ENCODE measurements at regions of chr2 and their contacts with region 1.

Region 1: DNA sequence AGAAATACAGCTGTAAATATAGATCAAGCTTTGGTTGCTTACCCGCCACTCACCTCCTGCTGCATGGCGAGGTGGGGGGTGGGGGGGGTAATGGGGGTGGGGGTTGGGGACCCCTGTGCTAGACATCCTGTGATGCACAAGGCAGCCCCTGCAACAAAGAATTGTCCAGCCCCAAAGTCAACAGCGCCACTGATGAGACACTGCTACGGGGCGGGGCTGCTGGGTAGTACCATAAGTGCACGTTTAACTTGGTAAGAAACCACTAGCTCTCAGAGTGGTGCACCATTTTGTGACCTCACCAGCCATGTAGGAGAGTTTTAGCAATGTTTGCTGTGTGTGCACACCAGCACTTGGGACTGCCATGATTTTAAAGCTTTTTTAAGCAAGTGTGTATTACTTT is 40.3 kb downstream of the SNORC start:
- DNase-seq: no peak
- H3K4me3 ChIP-seq: no peak overlapping the region
- H3K4me3 Mint-ChIP-seq: no peak overlapping the region
- H3K27ac ChIP-seq: no peak overlapping the region
- H3K27ac Mint-ChIP-seq: no peak overlapping the region
- H3K4me1 ChIP-seq: no peaks in the 10 kb centered on the region
- H3K4me1 Mint-ChIP-seq: no peaks in the 10 kb centered on the region
- H3K27me3 ChIP-seq: no peaks in the 10 kb centered on the region
- H3K27me3 Mint-ChIP-seq: peaks cover 6 to 51% of the 10 kb centered on the region in 2 donors

Region 2: DNA sequence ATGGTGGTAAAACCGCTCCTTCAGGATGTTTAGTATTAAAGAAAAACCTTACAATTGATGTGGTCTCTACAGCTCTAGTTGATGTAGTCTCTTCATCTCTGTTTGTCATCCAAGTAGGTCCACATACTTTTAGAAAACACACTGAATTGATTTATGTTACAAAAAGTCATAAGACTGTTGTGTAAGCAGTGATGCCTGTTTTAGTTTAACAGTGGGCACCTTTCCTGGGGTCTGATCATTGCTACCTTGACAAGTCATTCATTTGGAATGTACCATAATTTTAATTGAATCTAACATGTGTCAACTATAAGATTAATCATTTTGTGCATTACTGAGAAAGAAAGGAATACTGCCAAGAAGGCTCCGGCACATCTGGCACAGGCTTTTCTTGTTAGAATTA is 178.9 kb before region 1 on chr2:
- CTCF ChIA-PET with region 1: no interaction called
- POLR2A ChIA-PET with region 1: interaction called, 10 read pairs
- DNase-seq: no peak
- H3K4me3 ChIP-seq: no peak overlapping the region
- H3K4me3 Mint-ChIP-seq: no peak overlapping the region
- H3K27ac ChIP-seq: no peak overlapping the region
- H3K27ac Mint-ChIP-seq: peak overlapping the region in 3 of 8 donors; percentile 36 to 64 (median 37)
- H3K4me1 ChIP-seq: no peaks in the 10 kb centered on the region
- H3K4me1 Mint-ChIP-seq: peaks cover 19 to 38% (median 26%) of the 10 kb centered on the region in 3 donors
- H3K27me3 ChIP-seq: no peaks in the 10 kb centered on the region
- H3K27me3 Mint-ChIP-seq: no peaks in the 10 kb centered on the region

Region 3: DNA sequence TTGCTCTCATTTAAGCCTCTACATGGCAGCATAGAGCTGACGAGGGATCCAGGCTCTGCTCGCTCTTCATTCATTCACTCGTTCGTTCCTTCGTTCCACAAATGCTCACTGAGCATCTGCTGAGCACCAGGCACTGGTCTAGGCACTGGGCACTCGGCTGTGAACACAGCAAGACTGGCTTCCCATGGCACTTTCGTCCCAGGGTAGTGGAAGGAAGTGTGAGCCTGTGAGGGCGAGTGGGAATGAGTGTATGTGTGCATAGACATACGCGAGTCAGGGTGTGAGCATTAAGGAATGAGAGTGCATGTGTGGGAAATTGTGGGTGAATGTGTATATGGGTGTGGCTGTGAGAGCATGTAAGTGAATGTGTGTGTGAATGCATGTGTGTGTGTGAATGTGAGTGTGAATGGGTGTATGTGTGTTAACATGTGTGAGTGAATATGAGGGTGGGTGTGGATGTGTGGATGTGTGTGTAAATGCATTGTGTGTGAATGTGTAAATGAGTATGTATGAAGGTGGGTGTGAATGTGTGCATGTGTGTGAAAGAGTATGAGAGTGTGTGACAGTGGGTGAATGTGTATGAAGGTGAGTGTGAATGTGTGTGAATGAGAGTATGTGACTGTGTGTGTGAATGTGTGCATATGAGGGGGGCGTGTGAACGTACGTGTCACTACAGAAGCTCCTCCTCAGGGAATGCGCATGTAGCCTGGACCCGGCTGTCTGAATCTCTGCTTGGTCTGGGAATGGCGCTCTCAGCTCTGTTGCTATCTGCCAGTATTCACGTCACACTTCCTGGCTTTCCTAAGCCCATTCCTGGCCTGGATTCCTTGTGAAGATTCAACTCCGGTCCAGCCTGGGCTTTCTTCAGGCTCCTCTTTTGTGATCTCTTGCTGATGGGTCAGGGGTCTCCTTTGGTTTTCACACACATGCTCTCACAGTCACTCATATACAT is 11.5 kb before region 1 on chr2:
- CTCF ChIA-PET with region 1: no interaction called
- POLR2A ChIA-PET with region 1: no interaction called
- DNase-seq: no peak
- H3K4me3 ChIP-seq: no peak overlapping the region
- H3K4me3 Mint-ChIP-seq: no peak overlapping the region
- H3K27ac ChIP-seq: no peak overlapping the region
- H3K27ac Mint-ChIP-seq: no peak overlapping the region
- H3K4me1 ChIP-seq: no peaks in the 10 kb centered on the region
- H3K4me1 Mint-ChIP-seq: no peaks in the 10 kb centered on the region
- H3K27me3 ChIP-seq: no peaks in the 10 kb centered on the region
- H3K27me3 Mint-ChIP-seq: peaks cover 0 to 3% of the 10 kb centered on the region in 2 donors

Region 4: GRCh38 chr2:232937278-232937906 is 27.0 kb after region 1 on chr2:
- CTCF ChIA-PET with region 1: no interaction called
- POLR2A ChIA-PET with region 1: no interaction called
- DNase-seq: no peak
- H3K4me3 ChIP-seq: no peak overlapping the region
- H3K4me3 Mint-ChIP-seq: no peak overlapping the region
- H3K27ac ChIP-seq: no peak overlapping the region
- H3K27ac Mint-ChIP-seq: no peak overlapping the region
- H3K4me1 ChIP-seq: no peaks in the 10 kb centered on the region
- H3K4me1 Mint-ChIP-seq: peaks cover 5 to 14% (median 8%) of the 10 kb centered on the region in 3 donors
- H3K27me3 ChIP-seq: no peaks in the 10 kb centered on the region
- H3K27me3 Mint-ChIP-seq: peaks cover 6 to 30% of the 10 kb centered on the region in 2 donors